IMR-90 (cell line): ENCODE measurements at regions of chr1 and their contacts with region 1.

Region 1: DNA sequence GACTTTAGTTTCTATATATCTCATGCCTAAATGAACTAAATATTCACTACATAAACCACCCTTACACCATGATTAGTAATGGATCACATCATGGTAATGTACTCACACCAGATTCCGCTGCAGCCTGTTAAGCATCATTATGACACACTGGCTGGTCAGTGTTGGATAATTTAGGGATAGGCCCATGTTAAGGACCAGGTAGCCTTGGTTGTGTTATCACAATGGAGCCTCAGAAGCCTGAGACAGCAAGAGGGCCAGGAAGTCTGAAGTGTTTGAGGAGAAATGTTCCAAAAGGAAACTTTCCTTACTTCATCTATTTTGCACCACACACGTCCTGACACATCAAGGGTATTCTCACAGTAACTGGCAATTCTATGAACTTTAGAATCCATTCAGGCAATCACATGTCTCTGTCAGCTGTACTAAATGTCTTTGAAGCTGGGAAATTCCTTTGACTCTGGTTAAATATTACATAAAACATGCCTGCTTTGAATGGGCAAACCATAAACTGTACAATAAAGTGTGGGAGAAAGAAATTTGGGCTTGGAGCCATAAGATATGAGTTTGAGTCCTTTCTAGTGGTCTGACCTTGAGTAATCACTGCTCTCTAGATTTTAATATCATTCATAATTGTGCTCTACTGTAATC is 105.3 kb upstream of the DPT start:
- DNase-seq: no peak
- ATAC-seq: no peak
- H3K4me3 ChIP-seq: no peak overlapping the region
- H3K27ac ChIP-seq: no peak overlapping the region
- H3K4me1 ChIP-seq: no peaks in the 10 kb centered on the region
- H3K27me3 ChIP-seq: no peaks in the 10 kb centered on the region
- CTCF ChIP-seq: no peak
- POLR2A ChIP-seq: no peak
- RAD21 ChIP-seq: no peak

Region 2: DNA sequence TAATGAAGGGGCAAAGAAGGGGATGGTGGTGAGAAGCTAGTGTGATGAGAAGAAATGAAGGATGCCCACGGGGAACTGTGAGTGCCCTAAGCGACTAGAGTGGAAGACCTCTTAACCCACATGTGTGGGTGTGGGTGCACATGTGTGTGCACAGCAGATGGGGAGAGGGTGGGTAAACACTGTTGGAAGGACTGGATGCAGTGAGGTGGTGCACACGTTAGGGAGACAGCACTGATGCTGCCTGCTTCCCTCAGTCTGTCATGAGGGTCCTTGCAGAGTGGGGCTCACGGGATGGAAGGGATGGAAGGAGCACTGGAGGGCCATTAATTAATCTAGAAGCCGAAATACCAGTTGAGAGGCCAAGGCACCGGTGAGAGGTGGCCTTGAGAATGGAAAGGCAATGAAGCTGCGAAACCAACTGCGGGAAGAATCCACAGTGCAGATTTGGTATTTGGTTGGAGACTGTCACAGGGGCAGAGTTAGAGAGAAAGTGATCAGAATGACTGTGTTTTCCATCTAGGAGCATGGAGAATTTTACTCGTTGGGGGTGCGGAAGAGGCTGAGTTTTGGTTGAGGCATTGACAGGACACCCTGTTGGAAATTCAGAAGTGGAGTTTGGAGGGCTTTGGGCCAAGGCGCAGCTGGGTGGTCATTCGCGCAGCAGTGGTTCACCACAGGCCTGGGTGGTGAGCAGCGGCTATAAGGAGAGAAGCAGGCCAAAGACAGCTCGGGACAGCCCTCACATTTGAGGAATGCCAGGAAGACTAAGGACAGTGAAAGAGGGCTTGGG is 1188.5 kb before region 1 on chr1:
- CTCF ChIA-PET with region 1: no interaction called
- POLR2A ChIA-PET with region 1: interaction called, 12 read pairs
- dilution Hi-C with region 1: no loop called
- in situ Hi-C with region 1: no loop called
- intact Hi-C with region 1: no loop called
- DNase-seq: no peak
- ATAC-seq: no peak
- H3K4me3 ChIP-seq: no peak overlapping the region
- H3K27ac ChIP-seq: no peak overlapping the region
- H3K4me1 ChIP-seq: no peaks in the 10 kb centered on the region
- H3K27me3 ChIP-seq: peaks cover 20% of the 10 kb centered on the region
- CTCF ChIP-seq: no peak
- POLR2A ChIP-seq: no peak
- RAD21 ChIP-seq: no peak

Region 3: DNA sequence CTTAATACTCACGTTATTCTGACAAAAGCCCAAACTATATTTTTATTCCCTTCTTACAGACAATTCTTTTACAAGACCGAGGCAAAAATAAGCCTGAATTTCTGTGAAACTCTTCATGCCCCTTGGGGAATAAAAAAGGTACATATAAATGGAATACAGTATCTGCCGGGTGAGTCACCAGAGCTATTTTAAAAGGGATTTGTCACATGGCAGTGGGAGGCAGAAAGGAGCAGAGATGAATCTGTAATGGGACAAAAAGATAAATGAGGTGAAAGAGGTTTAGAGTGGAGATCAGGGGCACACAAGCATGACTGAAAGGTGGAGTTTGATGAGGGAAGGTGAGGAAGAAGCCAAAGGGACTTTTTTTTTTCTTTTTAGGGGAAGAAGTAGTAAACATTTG is 249.2 kb before region 1 on chr1:
- CTCF ChIA-PET with region 1: no interaction called
- POLR2A ChIA-PET with region 1: no interaction called
- dilution Hi-C with region 1: no loop called
- in situ Hi-C with region 1: no loop called
- intact Hi-C with region 1: no loop called
- DNase-seq: peak; percentile 9
- ATAC-seq: no peak
- H3K4me3 ChIP-seq: no peak overlapping the region
- H3K27ac ChIP-seq: no peak overlapping the region
- H3K4me1 ChIP-seq: no peaks in the 10 kb centered on the region
- H3K27me3 ChIP-seq: no peaks in the 10 kb centered on the region
- CTCF ChIP-seq: no peak
- POLR2A ChIP-seq: no peak
- RAD21 ChIP-seq: no peak